ENCODE measurements at regions of chr13 and their contacts with region 1.

Region 1: GRCh38 chr13:100573121-100573520 is 15.5 kb downstream of the GGACT start:
- DNase-seq: peak; percentile 84
- ATAC-seq: peak; percentile 89
- H3K4me3 Mint-ChIP-seq: no peak overlapping the region
- H3K27ac Mint-ChIP-seq: no peak overlapping the region
- H3K4me1 Mint-ChIP-seq: peaks cover 30% of the 10 kb centered on the region
- H3K27me3 Mint-ChIP-seq: no peaks in the 10 kb centered on the region

Region 2: GRCh38 chr13:100209857-100210825 is 363.0 kb before region 1 on chr13:
- CTCF ChIA-PET with region 1: no interaction called
- POLR2A ChIA-PET with region 1: no interaction called
- DNase-seq: no peak
- ATAC-seq: no peak
- H3K4me3 Mint-ChIP-seq: no peak overlapping the region
- H3K27ac Mint-ChIP-seq: no peak overlapping the region
- H3K4me1 Mint-ChIP-seq: peaks cover 2% of the 10 kb centered on the region
- H3K27me3 Mint-ChIP-seq: no peaks in the 10 kb centered on the region

Region 3: DNA sequence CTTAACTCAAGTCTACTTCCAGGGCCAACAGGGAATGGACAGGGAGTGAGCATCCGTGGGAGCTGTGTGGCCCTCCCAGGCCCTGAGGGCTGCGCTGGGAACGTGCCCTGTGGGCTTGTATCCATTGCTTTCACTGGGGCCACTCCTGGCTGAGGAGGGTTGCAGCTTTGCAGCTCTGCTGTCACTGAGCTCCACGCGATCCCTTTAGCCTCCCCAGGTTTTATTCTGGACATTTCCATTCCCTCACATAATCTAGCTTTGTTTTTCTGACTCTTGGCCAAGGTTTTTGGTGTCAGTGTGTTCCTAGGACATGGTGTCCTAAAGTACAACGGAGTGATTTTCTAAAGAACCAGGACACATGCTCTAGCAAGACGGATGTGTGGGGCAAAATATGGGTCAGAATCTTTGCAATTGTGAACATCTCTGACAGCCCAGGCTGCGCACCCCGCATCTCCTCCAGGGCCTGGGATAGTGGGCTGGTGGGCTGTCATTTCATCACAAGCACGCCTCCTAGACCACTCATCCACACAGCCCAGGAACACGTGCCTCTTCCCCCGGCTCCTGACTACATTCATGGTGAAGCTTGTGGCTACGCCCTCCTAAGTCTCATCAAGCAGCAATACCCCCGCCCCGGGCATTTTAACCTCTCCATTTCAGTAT is 12.5 kb before region 1 on chr13:
- CTCF ChIA-PET with region 1: interaction called, 14 read pairs
- POLR2A ChIA-PET with region 1: no interaction called
- DNase-seq: no peak
- ATAC-seq: no peak
- H3K4me3 Mint-ChIP-seq: no peak overlapping the region
- H3K27ac Mint-ChIP-seq: no peak overlapping the region
- H3K4me1 Mint-ChIP-seq: peaks cover 5% of the 10 kb centered on the region
- H3K27me3 Mint-ChIP-seq: peaks cover 2% of the 10 kb centered on the region

Region 4: GRCh38 chr13:100588331-100589177 is 15.4 kb after region 1 on chr13 and contains the start of gene GGACT:
- CTCF ChIA-PET with region 1: interaction called, 167 read pairs
- POLR2A ChIA-PET with region 1: interaction called, 8 read pairs
- DNase-seq: peak; percentile 86
- ATAC-seq: peak; percentile 85
- H3K4me3 Mint-ChIP-seq: peak within 1 kb of the TSS; percentile 76
- H3K27ac Mint-ChIP-seq: peak within 1 kb of the TSS; percentile 95
- H3K4me1 Mint-ChIP-seq: peaks cover 65% of the 10 kb centered on the region
- H3K27me3 Mint-ChIP-seq: no peaks in the 10 kb centered on the region
- total RNA-seq, gene GGACT: 3.1 to 3.5 TPM

Region 5: DNA sequence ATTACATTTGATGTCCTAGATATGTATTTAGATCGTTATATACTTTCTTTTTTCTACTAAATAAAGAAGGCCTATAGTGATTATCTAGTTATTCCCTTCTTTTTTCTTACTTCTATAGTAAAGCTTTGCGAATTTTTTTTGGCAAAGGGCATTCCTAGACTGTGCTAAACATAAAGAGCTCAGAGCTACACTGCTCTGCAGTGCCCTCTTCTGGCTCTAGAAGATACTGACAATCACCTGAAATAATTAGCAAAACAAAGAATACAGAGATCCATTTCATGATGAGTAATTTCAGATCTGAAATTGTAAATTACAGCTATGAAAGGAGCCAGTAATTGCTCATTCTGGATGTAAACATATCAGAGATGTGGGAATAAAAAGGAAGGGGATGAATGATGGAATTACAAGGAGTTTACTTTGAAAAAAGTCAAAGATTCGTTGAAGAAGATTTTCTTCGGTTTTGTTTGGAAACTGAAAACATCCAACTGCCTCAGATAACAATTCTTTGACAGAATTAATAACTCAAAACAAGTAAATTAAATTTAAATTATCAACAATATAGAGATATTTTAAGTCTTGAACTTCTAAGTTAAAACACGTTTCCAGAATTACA is 554.7 kb after region 1 on chr13:
- CTCF ChIA-PET with region 1: interaction called, 24 read pairs
- POLR2A ChIA-PET with region 1: no interaction called
- DNase-seq: peak; percentile 37
- ATAC-seq: peak; percentile 64
- H3K4me3 Mint-ChIP-seq: no peak overlapping the region
- H3K27ac Mint-ChIP-seq: no peak overlapping the region
- H3K4me1 Mint-ChIP-seq: no peaks in the 10 kb centered on the region
- H3K27me3 Mint-ChIP-seq: peaks cover 15% of the 10 kb centered on the region